ENCODE measurements at regions of chr9 and their contacts with region 1.

Region 1: GRCh38 chr9:68951879-68952659 is 61.8 kb downstream of the PRKACG start:
- H3K4me3 Mint-ChIP-seq: peak overlapping the region; percentile 47
- H3K27ac Mint-ChIP-seq: peak overlapping the region; percentile 88
- H3K4me1 Mint-ChIP-seq: peaks cover 60% of the 10 kb centered on the region
- H3K27me3 Mint-ChIP-seq: no peaks in the 10 kb centered on the region

Region 2: DNA sequence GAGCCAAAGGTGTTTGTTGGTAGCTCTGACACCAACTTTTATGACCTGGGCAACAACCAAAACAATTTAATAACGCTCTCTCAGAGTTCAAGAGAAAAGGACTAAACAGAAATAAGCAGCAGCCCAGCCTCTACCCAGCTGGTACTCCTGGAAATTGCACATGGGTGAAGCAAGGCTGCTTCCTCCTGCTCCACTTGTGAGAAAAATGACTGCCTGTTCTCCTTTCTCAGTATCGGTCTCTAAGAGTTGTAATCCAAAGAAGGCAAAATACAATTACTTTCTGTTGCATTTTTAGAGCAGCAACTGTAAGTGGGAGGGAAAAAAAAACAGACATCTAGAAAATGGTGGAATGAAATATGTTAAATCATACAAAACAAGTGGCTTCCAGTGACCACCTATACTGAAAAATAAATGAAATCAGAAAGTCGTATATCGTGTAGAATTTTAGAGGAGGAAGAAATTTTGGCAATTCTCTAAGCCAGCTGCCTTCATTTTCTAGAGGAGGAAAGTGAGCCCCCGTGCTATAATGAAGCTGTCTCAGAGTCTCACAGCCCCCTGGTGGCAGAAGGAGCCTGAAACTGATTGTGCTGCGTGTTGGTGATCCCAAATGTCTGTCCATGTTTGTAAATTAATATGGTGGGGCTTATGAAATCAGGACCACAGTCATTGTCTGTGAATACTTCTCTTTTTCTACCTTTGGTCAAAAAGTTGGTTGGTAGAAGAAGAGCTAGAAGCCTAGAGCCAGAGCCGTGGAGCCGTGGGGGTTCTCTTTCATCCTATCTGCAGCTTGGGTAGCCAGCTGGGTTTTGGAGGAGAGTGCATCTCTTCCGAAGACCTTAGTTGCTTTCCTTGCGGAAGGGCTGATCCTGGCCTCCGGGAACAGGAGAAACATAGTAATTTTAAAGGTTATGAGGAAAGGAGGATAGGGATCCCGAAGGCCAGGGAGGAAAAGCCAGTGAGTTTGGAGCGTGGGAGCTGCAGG is 107.1 kb before region 1 on chr9:
- intact Hi-C with region 1: loop called (anchors 10 kb)
- H3K4me3 Mint-ChIP-seq: peak overlapping the region; percentile 79
- H3K27ac Mint-ChIP-seq: peak overlapping the region; percentile 86
- H3K4me1 Mint-ChIP-seq: peaks cover 45% of the 10 kb centered on the region
- H3K27me3 Mint-ChIP-seq: no peaks in the 10 kb centered on the region

Measured in dendritic cell treated with granulocyte-macrophage colony-stimulating factor and Interleukin-4, amounts not matched to agents 40 ng/mL and 50 ng/mL, for 4 days (primary cell).